Naive thymus-derived CD4-positive, alpha-beta T cell (primary cell): ENCODE measurements at regions of chr6 and their contacts with region 1.

Region 1: DNA sequence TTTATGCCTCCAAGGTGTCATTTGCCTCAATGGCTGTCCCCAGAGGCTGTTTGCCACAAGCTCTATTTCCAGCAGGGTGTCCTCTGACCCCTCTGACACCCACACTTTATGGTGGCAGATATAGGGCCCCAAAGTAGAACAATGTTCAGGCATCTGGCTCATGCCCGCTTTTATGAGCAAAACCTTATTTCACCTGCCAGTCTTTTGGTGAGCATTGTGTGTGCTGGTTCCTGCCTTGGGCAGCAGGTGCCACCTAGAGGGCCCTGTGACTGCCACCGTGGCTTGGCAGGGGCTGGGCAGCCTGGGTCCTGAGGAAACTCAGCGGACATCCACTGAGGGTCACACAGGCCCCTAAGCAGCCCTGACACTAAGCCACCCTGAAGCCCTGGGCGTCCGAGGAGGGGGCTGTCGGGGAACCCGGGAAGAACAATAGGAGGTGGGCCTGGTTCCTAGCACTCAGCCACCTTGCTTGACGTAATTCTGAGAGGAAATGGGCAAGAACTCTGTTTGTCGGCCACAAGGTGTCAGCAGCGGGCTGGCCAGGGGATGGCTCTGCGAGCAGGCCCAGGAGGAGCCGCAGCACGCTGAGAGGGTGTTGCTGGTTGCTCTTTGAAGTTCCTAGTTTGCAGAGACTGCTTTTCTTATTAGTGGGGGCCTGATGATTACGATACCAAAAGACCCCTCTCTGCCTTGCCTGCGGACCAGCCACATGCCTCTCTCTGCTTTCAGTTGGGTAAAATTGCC is 148.9 kb downstream of the SCML4 start:
- DNase-seq: peak; percentile 77 to 90 (median 86)
- ATAC-seq: peak; percentile 97
- H3K4me3 ChIP-seq: peak overlapping the region; percentile 36
- H3K4me3 Mint-ChIP-seq: peak overlapping the region in 8 of 10 donors; percentile 49 to 83 (median 76)
- H3K27ac ChIP-seq: peak overlapping the region; percentile 71
- H3K27ac Mint-ChIP-seq: peak overlapping the region; percentile 74 to 96 (median 85)
- H3K4me1 ChIP-seq: peaks cover 0 to 10% of the 10 kb centered on the region in 2 donors
- H3K4me1 Mint-ChIP-seq: peaks cover 0 to 17% (median 9%) of the 10 kb centered on the region in 7 donors
- H3K27me3 ChIP-seq: no peaks in the 10 kb centered on the region
- H3K27me3 Mint-ChIP-seq: peaks cover 0 to 15% (median 0%) of the 10 kb centered on the region in 5 donors

Region 2: GRCh38 chr6:107033126-107033525 is 642.0 kb before region 1 on chr6:
- CTCF ChIA-PET with region 1: no interaction called
- POLR2A ChIA-PET with region 1: no interaction called
- intact Hi-C with region 1: no loop called
- DNase-seq: no peak
- ATAC-seq: no peak
- H3K4me3 ChIP-seq: no peak overlapping the region
- H3K4me3 Mint-ChIP-seq: no peak overlapping the region
- H3K27ac ChIP-seq: no peak overlapping the region
- H3K27ac Mint-ChIP-seq: peak overlapping the region in 1 of 9 donors; percentile 24
- H3K4me1 ChIP-seq: peaks cover 3 to 17% of the 10 kb centered on the region in 2 donors
- H3K4me1 Mint-ChIP-seq: peaks cover 22 to 56% (median 46%) of the 10 kb centered on the region in 7 donors
- H3K27me3 ChIP-seq: no peaks in the 10 kb centered on the region
- H3K27me3 Mint-ChIP-seq: no peaks in the 10 kb centered on the region

Region 3: DNA sequence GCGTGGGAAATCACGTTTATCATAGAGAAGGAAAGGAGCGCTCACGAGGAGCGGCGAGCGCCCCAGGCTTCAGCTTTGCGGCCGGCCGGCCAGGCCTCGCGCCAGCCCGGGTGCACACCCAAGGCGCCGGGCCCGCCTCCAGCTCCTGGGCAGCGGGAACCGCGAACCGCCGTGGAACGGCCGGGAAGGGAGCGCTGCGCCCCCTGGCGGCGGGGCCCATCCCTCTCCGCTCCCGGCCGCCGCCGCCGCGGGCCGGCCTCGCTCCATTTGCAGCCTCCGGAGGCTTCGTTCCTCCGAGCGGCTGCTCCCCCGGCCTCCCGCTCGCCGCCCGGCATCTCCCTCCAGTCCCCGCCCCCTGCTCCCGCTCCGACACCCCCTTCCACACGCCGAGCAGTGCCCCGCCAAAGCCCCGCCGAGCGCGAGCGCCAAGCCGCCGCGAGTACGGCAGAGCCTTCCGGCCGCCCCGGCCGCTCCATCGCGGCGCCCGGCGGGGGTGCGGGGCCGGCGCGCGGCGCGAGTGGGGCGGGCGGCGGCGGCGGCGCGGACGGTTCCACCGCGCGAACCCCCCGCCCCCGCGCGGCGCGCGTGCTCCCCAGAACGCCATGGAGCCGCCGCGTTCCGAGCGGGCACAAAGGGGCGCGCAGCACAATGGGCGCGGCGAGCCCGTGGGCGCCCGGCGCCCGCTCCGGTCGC is 560.8 kb before region 1 on chr6:
- CTCF ChIA-PET with region 1: no interaction called
- POLR2A ChIA-PET with region 1: no interaction called
- intact Hi-C with region 1: loop called in 1 of 2 experiments (anchors 1 kb)
- DNase-seq: peak; percentile 39 to 85 (median 67)
- ATAC-seq: peak; percentile 88
- H3K4me3 ChIP-seq: peak overlapping the region; percentile 32
- H3K4me3 Mint-ChIP-seq: peak overlapping the region; percentile 71 to 88 (median 85)
- H3K27ac ChIP-seq: no peak overlapping the region
- H3K27ac Mint-ChIP-seq: peak overlapping the region in 5 of 9 donors; percentile 49 to 77 (median 63)
- H3K4me1 ChIP-seq: peaks cover 14% of the 10 kb centered on the region in 2 donors
- H3K4me1 Mint-ChIP-seq: peaks cover 8 to 21% (median 18%) of the 10 kb centered on the region in 7 donors
- H3K27me3 ChIP-seq: no peaks in the 10 kb centered on the region
- H3K27me3 Mint-ChIP-seq: peaks cover 0 to 22% (median 7%) of the 10 kb centered on the region in 5 donors

Region 4: DNA sequence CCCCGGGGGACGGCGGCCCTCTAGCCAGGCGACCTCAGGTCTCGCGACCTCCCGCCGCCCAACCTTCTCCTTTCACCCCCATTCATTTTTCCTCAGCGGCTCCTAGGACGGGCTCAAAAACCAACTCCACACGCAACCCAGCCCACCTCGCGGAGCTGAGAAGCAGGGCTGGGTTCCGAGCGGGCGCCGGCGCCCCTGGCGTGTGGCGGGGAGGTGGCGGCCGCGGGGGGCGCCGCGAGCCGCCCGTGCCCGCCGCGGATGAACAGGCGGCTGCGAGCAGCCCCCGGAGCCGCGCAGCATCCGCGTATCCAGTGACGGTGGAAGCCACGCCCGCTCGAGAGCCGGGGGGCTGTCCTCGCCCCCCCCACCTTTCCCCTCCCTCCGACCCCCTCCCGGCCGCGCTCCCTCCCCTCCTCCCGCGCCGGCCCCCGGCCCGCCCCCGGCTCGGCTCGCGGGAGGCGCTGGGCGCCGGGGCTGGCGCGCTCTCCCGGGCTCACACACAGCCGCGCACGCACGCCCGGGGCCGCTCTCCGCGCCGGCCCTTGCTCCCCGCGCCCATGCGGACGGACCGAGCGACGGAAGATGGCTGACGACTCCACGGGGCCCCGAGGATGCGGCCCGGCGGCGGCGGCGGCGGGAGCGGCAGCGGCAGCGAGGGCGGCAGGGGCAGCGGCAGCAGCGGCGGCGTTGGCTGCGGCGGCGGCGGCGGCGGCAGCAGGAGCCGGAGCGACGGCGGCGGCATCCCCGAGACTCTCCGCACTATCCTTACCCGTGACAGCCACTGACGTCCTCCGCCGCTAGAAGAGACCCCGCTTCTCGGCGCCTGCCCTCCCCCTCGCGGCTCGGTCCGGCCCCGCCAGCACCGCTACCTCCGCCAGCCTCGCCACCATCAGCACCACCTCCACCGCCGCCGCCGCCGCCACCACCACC is 185.3 kb before region 1 on chr6 and contains the start of gene SOBP:
- CTCF ChIA-PET with region 1: no interaction called
- POLR2A ChIA-PET with region 1: no interaction called
- intact Hi-C with region 1: loop called in 1 of 2 experiments (anchors 1 kb)
- DNase-seq: peak in 8 of 9 donors; percentile 28 to 52 (median 35)
- ATAC-seq: peak; percentile 58
- H3K4me3 ChIP-seq: peak within 1 kb of the TSS; percentile 59
- H3K4me3 Mint-ChIP-seq: peak within 1 kb of the TSS; percentile 85 to 95 (median 90)
- H3K27ac ChIP-seq: no peak within 1 kb of the TSS
- H3K27ac Mint-ChIP-seq: peak within 1 kb of the TSS in 4 of 9 donors; percentile 7 to 39 (median 34)
- H3K4me1 ChIP-seq: peaks cover 9 to 15% of the 10 kb centered on the region in 2 donors
- H3K4me1 Mint-ChIP-seq: peaks cover 11 to 22% (median 20%) of the 10 kb centered on the region in 7 donors
- H3K27me3 ChIP-seq: peaks cover 18 to 23% of the 10 kb centered on the region in 2 donors
- H3K27me3 Mint-ChIP-seq: peaks cover 32 to 52% (median 43%) of the 10 kb centered on the region in 5 donors
- total RNA-seq, gene SOBP: 0.08 to 0.15 TPM in 2 of 5 experiments, not detected in the others

Region 5: GRCh38 chr6:107800564-107801164 is 125.5 kb after region 1 on chr6:
- CTCF ChIA-PET with region 1: no interaction called
- POLR2A ChIA-PET with region 1: no interaction called
- intact Hi-C with region 1: loop called in 1 of 2 experiments (anchors 1 kb)
- DNase-seq: peak in 4 of 9 donors; percentile 28 to 53 (median 42)
- ATAC-seq: peak; percentile 75
- H3K4me3 ChIP-seq: no peak overlapping the region
- H3K4me3 Mint-ChIP-seq: peak overlapping the region in 2 of 10 donors; percentile 33 to 43
- H3K27ac ChIP-seq: no peak overlapping the region
- H3K27ac Mint-ChIP-seq: peak overlapping the region in 8 of 9 donors; percentile 53 to 96 (median 90)
- H3K4me1 ChIP-seq: peaks cover 10 to 34% of the 10 kb centered on the region in 2 donors
- H3K4me1 Mint-ChIP-seq: peaks cover 17 to 87% (median 81%) of the 10 kb centered on the region in 7 donors
- H3K27me3 ChIP-seq: no peaks in the 10 kb centered on the region
- H3K27me3 Mint-ChIP-seq: peaks cover 0 to 9% (median 0%) of the 10 kb centered on the region in 5 donors

Region 6: GRCh38 chr6:108052706-108053105 is 377.5 kb after region 1 on chr6:
- CTCF ChIA-PET with region 1: interaction called, 4 read pairs
- POLR2A ChIA-PET with region 1: no interaction called
- intact Hi-C with region 1: loop called (anchors 1 kb)
- DNase-seq: no peak
- ATAC-seq: no peak
- H3K4me3 ChIP-seq: no peak overlapping the region
- H3K4me3 Mint-ChIP-seq: no peak overlapping the region
- H3K27ac ChIP-seq: no peak overlapping the region
- H3K27ac Mint-ChIP-seq: peak overlapping the region in 1 of 9 donors; percentile 66
- H3K4me1 ChIP-seq: no peaks in the 10 kb centered on the region
- H3K4me1 Mint-ChIP-seq: peaks cover 0 to 5% (median 0%) of the 10 kb centered on the region in 7 donors
- H3K27me3 ChIP-seq: no peaks in the 10 kb centered on the region
- H3K27me3 Mint-ChIP-seq: no peaks in the 10 kb centered on the region